ENCODE measurements at regions of chr6 and their contacts with region 1.

Region 1: GRCh38 chr6:24883618-24884017 is 52.1 kb downstream of the RIPOR2 start:
- DNase-seq: peak; percentile 62
- H3K4me3 Mint-ChIP-seq: peak overlapping the region; percentile 66
- H3K27ac Mint-ChIP-seq: peak overlapping the region; percentile 97
- H3K4me1 Mint-ChIP-seq: peaks cover 86% of the 10 kb centered on the region
- H3K27me3 Mint-ChIP-seq: no peaks in the 10 kb centered on the region

Region 2: DNA sequence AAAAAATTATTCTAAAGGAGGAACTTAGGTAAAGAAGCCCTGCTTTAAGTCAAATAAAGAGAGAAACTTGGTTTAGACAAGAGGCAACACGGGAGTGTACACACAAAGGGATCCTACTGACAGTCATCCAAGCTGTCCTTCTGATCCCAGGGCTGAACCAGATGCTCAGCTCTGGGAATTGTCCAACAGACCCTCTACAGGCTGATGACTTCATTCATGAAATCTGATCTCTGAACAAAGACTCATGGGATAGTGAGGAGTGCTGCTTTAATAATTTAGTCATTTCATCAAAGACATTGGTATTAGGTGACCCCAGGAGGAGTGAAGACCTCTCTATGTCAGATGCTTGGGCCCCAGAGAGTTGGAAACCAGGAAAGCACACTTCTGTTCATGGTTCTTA is 19.3 kb before region 1 on chr6:
- CTCF ChIA-PET with region 1: interaction called, 10 read pairs
- POLR2A ChIA-PET with region 1: no interaction called
- intact Hi-C with region 1: no loop called
- DNase-seq: no peak
- H3K4me3 Mint-ChIP-seq: no peak overlapping the region
- H3K27ac Mint-ChIP-seq: peak overlapping the region; percentile 72
- H3K4me1 Mint-ChIP-seq: peaks cover 81% of the 10 kb centered on the region
- H3K27me3 Mint-ChIP-seq: no peaks in the 10 kb centered on the region

Region 3: GRCh38 chr6:24899997-24900325 is 16.3 kb after region 1 on chr6:
- CTCF ChIA-PET with region 1: interaction called, 21 read pairs
- POLR2A ChIA-PET with region 1: interaction called, 13 read pairs
- intact Hi-C with region 1: loop called (anchors 1 kb)
- DNase-seq: peak; percentile 70
- H3K4me3 Mint-ChIP-seq: peak overlapping the region; percentile 59
- H3K27ac Mint-ChIP-seq: peak overlapping the region; percentile 90
- H3K4me1 Mint-ChIP-seq: peaks cover 88% of the 10 kb centered on the region
- H3K27me3 Mint-ChIP-seq: no peaks in the 10 kb centered on the region

Region 4: GRCh38 chr6:24910961-24911712 is 27.5 kb after region 1 on chr6:
- CTCF ChIA-PET with region 1: interaction called, 12 read pairs
- POLR2A ChIA-PET with region 1: interaction called, 6 read pairs
- intact Hi-C with region 1: loop called (anchors 1 kb)
- DNase-seq: peak; percentile 70
- H3K4me3 Mint-ChIP-seq: peak overlapping the region; percentile 91
- H3K27ac Mint-ChIP-seq: peak overlapping the region; percentile 95
- H3K4me1 Mint-ChIP-seq: peaks cover 85% of the 10 kb centered on the region
- H3K27me3 Mint-ChIP-seq: no peaks in the 10 kb centered on the region

Region 5: GRCh38 chr6:24949020-24949569 is 65.5 kb after region 1 on chr6:
- CTCF ChIA-PET with region 1: interaction called, 7 read pairs
- POLR2A ChIA-PET with region 1: no interaction called
- intact Hi-C with region 1: loop called (anchors 2 kb)
- DNase-seq: peak; percentile 53
- H3K4me3 Mint-ChIP-seq: peak overlapping the region; percentile 22
- H3K27ac Mint-ChIP-seq: peak overlapping the region; percentile 73
- H3K4me1 Mint-ChIP-seq: peaks cover 61% of the 10 kb centered on the region
- H3K27me3 Mint-ChIP-seq: no peaks in the 10 kb centered on the region

Region 6: DNA sequence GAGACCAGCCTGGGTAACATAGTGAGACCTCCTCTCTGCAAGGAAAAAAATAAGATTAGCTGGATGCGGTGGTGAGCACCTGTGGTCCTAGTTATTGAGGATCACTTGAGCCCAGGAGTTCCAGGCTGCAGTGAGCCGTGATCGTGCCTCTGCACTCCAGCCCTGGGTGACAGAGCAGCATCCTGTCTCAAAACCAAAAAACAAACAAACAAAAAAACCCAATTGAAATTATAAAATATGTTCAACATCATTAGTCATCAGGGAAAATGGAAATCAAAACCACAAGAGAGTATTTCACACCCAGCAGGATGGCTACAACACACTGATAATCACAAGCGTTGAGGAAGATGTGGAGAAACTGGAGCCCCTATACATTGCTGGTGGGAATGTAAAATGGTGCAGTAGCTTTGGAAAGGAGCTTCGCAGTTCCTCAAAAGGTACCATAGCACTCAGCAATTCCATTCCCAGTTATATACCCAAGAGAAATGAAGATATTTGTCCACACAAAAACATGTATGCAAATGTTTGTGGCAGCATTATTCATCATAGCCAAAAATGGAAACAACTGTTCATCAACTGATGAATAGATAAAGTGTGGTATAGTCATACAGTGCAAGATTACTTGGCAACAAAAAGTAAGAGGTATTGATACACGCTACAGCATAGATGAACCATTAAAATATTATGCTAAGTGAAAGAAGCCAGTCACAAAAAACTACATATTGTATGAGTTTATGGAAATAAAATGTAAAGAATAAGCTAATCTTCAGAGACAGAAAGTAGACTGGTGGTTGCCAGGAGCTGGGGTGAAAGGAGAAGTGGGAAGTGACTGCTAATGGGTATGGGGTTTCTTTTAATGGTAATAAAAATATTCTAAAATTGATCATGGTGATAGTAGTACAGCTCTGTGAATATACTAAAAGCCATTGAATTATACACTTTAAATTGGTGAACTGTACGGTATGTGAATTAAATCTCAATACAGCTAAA is 90.9 kb after region 1 on chr6:
- CTCF ChIA-PET with region 1: interaction called, 4 read pairs
- POLR2A ChIA-PET with region 1: interaction called, 5 read pairs
- intact Hi-C with region 1: loop called (anchors 1 kb)
- DNase-seq: peak; percentile 69
- H3K4me3 Mint-ChIP-seq: peak overlapping the region; percentile 48
- H3K27ac Mint-ChIP-seq: peak overlapping the region; percentile 90
- H3K4me1 Mint-ChIP-seq: peaks cover 64% of the 10 kb centered on the region
- H3K27me3 Mint-ChIP-seq: no peaks in the 10 kb centered on the region

Measured in activated CD4-positive, alpha-beta memory T cell treated with anti-CD3 and anti-CD28 coated beads for 36 hours (primary cell).